PC-3 (cell line): ENCODE measurements at regions of chr11 and their contacts with region 1.

Region 1: GRCh38 chr11:112024773-112025678 is at the start of gene DLAT:
- DNase-seq: peak; percentile 87
- ATAC-seq: peak; percentile 85
- H3K4me3 ChIP-seq: peak within 1 kb of the TSS; percentile 100
- H3K27ac ChIP-seq: peak within 1 kb of the TSS; percentile 81
- H3K4me1 ChIP-seq: peaks cover 6% of the 10 kb centered on the region; the same call in 1 of the 2 replicates
- H3K27me3 ChIP-seq: no peaks in the 10 kb centered on the region
- CTCF ChIP-seq: no peak
- total RNA-seq, gene DLAT: 78.9 and 102 TPM in 2 replicates

Region 2: DNA sequence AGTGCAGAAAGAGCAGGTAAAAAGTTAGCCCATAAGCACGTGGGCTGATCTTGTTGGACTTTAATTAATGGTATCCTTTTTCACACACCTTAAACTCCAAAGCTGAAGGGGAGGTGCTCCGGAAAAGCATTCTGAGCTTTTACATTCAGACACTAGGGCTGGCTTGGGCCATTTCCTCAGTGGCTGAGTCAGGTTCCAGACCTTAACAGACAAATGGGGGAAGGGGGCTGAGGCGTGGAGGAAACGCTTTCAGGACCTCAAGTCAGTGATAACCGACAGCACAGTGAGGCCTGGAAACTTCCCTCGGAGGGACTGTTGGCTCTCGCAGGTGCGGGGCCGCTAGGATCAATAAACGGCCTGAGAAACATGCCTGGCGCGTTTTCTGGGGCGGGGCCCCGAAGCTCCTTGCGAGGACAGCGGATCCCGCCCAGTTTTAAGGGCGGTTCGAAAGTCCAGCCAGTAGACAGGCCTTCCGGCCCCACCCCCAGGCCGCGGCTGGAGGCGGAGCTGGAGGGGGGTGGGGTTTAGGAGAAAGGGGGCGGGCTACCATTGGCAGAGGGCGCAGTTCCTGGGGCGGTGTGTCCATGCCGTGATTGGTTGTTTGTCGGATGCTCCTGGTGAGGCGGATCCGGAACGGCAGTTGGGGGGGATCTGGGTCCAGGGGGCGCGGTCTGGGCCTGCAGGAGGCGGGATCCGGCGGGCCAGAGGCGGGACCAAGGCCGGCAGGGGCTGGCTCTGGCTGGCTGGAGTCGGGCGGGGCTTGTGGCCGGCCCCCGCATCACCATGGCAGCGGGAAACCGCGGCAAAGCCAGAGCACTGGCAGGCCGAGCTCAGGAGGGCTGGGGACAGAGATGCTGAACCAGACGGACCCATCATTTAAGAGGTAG is 98.3 kb before region 1 on chr11:
- CTCF ChIA-PET with region 1: interaction called, 14 read pairs
- POLR2A ChIA-PET with region 1: no interaction called
- intact Hi-C with region 1: loop called (anchors 5 kb)
- DNase-seq: peak; percentile 99
- ATAC-seq: peak; percentile 92
- H3K4me3 ChIP-seq: peak overlapping the region; percentile 69
- H3K27ac ChIP-seq: peak overlapping the region; percentile 17
- H3K4me1 ChIP-seq: peaks cover 25% of the 10 kb centered on the region
- H3K27me3 ChIP-seq: no peaks in the 10 kb centered on the region
- CTCF ChIP-seq: no peak

Region 3: DNA sequence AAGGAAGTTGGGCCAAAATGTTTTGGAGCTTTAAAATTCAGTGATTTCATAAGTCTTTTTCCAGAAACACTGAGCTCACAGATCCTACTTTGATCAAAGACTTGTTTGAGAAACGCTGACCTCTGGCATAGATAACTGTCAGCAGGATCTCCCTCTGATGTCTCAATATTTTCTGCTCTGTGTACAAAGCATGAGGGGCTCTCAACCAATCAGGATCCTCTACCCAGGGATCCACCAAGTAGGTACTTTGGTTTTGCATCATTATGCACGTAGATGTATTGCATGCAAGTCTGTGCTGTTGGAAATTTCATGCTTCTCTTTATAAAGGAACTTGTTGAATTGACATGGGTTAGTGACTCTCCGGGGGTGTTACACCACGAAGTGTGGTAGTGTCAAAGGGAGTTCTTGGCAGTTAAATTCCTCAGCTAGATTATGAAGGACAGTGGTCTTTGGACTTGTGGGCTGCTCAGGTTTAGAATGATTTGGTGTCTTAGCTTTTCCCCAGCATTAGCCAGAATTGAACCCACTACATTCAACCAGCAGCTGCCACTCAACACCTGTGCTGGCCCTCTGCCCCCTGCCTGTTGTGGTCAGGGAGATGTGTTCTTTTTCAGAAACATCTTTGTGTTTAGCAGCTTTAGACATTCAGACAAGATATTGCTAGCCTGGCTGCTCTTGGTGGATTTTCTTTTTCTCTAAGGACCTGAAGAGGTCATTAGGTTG is 89.5 kb before region 1 on chr11:
- CTCF ChIA-PET with region 1: interaction called, 14 read pairs
- POLR2A ChIA-PET with region 1: interaction called, 5 read pairs
- intact Hi-C with region 1: loop called (anchors 5 kb)
- DNase-seq: no peak
- ATAC-seq: no peak
- H3K4me3 ChIP-seq: no peak overlapping the region
- H3K27ac ChIP-seq: no peak overlapping the region
- H3K4me1 ChIP-seq: peaks cover 30% of the 10 kb centered on the region
- H3K27me3 ChIP-seq: no peaks in the 10 kb centered on the region
- CTCF ChIP-seq: no peak

Region 4: DNA sequence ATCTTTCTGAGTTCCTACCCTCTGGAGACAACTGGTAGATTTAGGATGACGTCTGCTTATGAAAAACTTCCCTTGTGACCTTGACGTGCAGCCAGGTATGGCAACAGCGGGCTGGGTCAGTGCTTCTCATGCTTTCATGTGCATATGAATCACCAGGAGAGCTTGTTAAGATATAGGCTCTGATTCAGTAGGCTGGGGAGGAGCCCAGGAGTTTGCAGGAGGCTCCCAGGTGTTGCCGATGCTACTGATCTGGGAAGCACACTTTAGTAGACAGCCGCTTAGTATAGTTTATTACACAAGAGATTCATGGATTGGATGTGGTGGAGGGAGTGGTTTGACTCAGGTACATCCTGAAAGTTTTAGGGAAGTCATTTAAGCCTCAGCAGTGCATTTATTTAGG is 64.1 kb before region 1 on chr11:
- CTCF ChIA-PET with region 1: interaction called, 11 read pairs
- POLR2A ChIA-PET with region 1: no interaction called
- intact Hi-C with region 1: no loop called
- DNase-seq: peak; percentile 94
- ATAC-seq: peak; percentile 97
- H3K4me3 ChIP-seq: no peak overlapping the region
- H3K27ac ChIP-seq: peak overlapping the region; percentile 82
- H3K4me1 ChIP-seq: peaks cover 16% of the 10 kb centered on the region
- H3K27me3 ChIP-seq: no peaks in the 10 kb centered on the region
- CTCF ChIP-seq: no peak

Region 5: DNA sequence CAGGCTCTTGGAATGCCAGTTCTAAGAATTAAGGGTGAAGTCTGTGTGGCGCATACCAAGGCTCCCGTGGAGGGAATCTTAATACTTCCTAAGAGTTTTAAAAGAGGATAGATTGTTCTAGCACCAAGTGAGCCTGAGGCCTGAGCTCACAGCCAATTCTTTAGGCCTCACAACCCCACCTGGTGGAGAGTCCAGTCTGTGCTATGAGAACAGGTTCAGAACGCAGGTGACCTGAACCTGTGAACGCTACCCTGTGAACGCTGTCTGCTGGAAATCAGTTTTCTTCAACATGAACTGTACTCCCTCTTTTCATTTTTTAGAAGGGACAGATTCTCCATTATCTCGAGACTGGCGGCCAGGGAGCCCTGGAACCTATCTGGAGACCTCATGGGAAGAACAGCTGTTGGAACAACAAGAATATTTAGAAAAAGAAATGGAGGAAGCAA is 43.0 kb before region 1 on chr11:
- CTCF ChIA-PET with region 1: no interaction called
- POLR2A ChIA-PET with region 1: no interaction called
- intact Hi-C with region 1: loop called (anchors 2 kb)
- DNase-seq: peak; percentile 84
- ATAC-seq: peak; percentile 57
- H3K4me3 ChIP-seq: no peak overlapping the region
- H3K27ac ChIP-seq: peak overlapping the region; percentile 24
- H3K4me1 ChIP-seq: peaks cover 35% of the 10 kb centered on the region
- H3K27me3 ChIP-seq: no peaks in the 10 kb centered on the region
- CTCF ChIP-seq: peak; percentile 90